ENCODE measurements at regions of chr17 and their contacts with region 1.

Region 1: DNA sequence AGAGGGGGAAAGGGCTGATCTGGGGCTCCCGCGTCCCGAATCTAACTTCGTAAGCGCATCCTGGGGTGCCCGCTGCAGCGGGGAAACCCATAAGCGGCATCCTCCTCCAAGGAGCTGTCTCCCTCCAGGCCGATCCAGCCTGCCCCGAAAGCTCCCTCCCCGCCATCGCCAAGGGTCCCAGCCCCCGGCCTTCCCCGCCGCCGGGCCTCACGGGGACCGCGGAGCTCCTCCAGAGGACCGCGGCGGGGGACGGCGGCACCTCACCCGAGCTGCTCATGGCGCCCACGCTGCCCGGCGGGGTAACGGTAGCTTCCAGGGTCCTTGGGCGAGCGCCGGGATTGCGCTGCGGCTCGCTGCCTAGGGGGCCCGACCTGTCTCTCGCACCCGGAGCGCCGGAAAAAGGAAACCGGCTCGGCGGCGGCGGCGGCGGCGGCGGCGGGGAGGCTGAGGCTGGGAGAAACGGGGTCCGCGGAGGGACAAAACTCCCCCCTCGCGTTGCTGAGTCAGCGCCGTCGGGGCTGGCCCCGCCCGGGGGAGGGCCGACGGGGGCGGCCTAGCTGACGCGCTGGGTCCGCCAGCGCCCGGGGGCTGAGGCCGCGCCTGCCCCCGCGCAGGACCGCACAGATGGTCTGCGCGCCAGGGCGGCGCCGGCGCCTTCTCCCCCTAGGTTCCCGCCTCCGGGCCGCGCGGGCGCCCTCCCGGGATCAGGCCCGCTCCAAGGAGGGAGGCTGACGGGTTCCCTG is at the start of gene BLMH:
- DNase-seq: peak; percentile 87
- H3K4me3 Mint-ChIP-seq: peak within 1 kb of the TSS; percentile 86
- H3K27ac Mint-ChIP-seq: peak within 1 kb of the TSS; percentile 83
- H3K4me1 Mint-ChIP-seq: peaks cover 22% of the 10 kb centered on the region
- H3K27me3 Mint-ChIP-seq: no peaks in the 10 kb centered on the region
- total RNA-seq, gene BLMH: 47.3 to 52.8 TPM

Region 2: GRCh38 chr17:30243002-30243967 is 48.4 kb before region 1 on chr17:
- CTCF ChIA-PET with region 1: no interaction called
- POLR2A ChIA-PET with region 1: no interaction called
- DNase-seq: no peak
- H3K4me3 Mint-ChIP-seq: no peak overlapping the region
- H3K27ac Mint-ChIP-seq: no peak overlapping the region
- H3K4me1 Mint-ChIP-seq: peaks cover 8% of the 10 kb centered on the region
- H3K27me3 Mint-ChIP-seq: peaks cover 14% of the 10 kb centered on the region

Region 3: DNA sequence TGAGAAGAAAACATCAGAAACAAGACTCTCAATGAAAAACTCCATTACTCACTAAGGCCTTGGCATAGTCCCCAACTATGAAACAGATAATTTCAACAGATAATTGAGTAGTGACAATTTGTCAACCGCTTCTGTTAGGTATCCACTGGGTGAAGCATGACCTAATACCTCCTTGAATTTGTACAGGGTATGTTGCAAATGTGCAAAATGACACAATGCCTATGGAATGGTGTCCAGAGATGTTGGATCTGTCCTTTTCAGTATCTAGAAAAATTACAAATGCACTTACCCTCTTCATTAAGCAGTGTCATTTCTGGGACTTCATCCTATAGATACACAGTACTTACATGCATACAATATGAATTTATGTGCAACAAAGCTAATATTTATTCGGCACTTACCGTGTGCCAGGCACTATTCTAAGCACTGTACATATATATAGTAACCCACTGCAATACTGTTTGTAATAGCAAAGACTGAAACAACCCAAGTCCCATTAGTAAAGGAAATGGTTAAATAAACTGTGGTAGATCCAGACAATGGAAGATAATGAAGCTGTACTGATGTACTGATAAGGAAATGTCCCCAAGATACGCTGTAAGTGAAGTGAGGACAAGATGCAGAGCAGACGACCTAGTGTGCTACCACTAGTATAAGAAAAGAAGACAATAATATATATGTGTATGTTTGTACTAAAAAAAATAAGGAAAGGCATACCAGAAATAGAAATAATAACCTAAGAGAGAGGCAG is 34.8 kb before region 1 on chr17:
- CTCF ChIA-PET with region 1: no interaction called
- POLR2A ChIA-PET with region 1: no interaction called
- DNase-seq: no peak
- H3K4me3 Mint-ChIP-seq: no peak overlapping the region
- H3K27ac Mint-ChIP-seq: no peak overlapping the region
- H3K4me1 Mint-ChIP-seq: peaks cover 20% of the 10 kb centered on the region
- H3K27me3 Mint-ChIP-seq: no peaks in the 10 kb centered on the region

Region 4: DNA sequence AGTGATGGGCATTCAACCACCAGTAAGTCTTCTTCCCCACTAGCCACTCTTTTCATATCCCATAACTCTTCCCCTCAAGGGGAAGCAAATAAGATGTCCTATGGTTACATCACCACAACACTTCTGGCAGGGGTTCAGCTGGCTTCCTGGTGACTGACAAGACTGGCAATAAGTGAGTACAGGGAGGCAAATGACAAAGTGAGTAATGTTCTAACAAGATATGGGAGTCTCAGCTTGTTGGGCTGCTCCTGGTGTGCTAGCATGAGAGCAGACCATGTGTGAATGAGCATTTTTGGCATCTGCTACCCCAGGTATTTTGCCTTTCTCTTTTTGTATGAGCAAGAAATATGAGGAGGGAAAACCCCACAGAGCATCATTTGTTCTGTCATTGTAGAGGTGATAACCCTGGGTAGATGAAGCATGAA is 32.2 kb after region 1 on chr17:
- CTCF ChIA-PET with region 1: no interaction called
- POLR2A ChIA-PET with region 1: interaction called, 18 read pairs
- DNase-seq: peak; percentile 22
- H3K4me3 Mint-ChIP-seq: no peak overlapping the region
- H3K27ac Mint-ChIP-seq: peak overlapping the region; percentile 53
- H3K4me1 Mint-ChIP-seq: peaks cover 21% of the 10 kb centered on the region
- H3K27me3 Mint-ChIP-seq: peaks cover 5% of the 10 kb centered on the region

Region 5: DNA sequence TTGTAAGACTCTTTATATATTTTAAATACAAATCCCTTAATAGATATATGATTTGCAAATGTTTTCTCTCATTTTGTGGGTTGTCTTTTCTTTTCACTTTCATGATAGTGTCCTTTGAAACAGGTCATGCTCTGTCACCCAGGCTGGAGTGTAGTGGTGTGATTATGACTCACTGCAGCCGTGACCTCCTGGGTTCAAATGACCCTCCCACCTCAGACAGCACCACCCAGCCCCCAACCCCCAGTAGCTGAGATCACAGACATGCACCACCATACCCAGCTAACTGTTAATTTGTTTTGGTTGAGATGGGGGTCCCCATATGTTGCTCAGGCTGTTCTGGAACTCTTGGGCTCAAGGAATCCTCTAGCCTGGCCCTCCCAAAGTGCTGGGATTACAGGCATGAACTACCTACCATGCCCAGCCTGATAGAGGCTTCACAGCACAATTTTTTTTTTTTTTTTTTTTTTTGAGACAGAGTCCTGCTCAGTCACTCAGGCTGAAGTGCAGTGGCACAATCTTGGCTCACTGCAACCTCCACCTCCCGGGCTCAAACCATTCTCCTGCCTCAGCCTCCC is 60.6 kb after region 1 on chr17:
- CTCF ChIA-PET with region 1: no interaction called
- POLR2A ChIA-PET with region 1: no interaction called
- DNase-seq: no peak
- H3K4me3 Mint-ChIP-seq: no peak overlapping the region
- H3K27ac Mint-ChIP-seq: no peak overlapping the region
- H3K4me1 Mint-ChIP-seq: peaks cover 5% of the 10 kb centered on the region
- H3K27me3 Mint-ChIP-seq: peaks cover 6% of the 10 kb centered on the region

Region 6: DNA sequence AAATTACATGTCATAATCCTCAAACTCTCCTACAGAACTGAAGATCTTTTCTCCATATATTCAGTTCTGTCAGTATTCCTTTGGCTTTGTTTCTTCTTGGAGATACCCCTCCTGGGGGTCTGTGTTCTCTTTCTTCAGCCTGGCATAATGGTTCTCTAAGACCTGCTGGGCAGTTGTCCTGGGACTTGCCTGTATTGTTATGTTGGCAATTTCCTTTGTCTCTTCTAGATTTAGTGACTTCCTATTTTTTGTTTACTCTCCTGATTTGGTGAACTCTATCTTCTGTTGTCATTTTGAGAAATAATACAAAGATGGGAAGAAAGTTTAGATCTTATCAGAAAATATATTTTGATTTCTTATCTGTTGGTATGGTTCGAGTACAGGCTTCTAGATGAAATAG is 313.3 kb after region 1 on chr17:
- CTCF ChIA-PET with region 1: no interaction called
- POLR2A ChIA-PET with region 1: no interaction called
- DNase-seq: no peak
- H3K4me3 Mint-ChIP-seq: no peak overlapping the region
- H3K27ac Mint-ChIP-seq: no peak overlapping the region
- H3K4me1 Mint-ChIP-seq: peaks cover 22% of the 10 kb centered on the region
- H3K27me3 Mint-ChIP-seq: peaks cover 2% of the 10 kb centered on the region